ENCODE measurements at regions of chr16 and their contacts with region 1.

Region 1: DNA sequence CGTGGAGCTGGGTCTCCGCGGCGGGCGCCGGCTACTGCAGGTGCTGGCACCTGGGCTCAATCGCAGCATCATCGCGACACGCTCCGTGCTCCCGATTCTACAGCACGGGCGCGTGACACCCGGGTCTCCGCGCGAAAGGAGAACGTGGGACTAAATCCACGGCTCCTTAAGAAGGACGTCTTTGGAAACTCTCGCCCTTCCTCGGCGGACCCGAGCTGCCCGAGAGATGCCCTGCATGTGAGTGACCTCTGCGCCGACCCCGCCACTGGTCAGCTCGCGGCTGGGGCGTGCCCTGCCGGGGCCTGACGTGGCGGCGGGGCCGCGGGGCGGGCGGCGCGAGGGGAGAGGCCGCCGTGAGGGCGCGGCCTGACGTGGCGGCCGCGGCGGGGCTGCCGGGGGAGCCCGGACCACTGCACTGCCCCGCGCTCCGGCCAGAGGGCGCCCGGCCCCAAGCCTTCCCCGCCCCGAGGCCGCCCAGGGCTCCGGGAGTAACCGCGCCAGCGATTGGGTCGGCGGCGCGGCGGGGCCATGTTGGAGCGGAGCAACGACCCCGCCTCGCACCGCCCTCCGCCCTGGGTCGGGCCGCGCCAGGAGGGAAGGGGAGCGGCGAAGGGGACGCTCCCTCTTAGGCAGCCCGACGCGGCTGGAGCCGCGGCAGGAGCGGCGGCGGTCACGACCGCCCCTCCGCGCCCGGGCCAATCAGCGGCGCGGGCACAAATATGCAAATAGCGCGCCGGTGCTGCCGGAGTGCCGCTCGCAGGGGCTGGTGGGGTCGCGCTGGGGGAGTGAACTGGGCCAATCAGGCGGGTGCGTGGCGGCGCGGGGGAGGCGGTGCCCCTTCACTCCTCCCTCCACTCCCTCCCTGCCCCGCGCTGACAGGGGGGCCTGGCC is 75.6 kb downstream of the CHD9 start:
- DNase-seq: peak; percentile 97
- ATAC-seq: peak; percentile 83
- H3K4me3 Mint-ChIP-seq: peak overlapping the region; percentile 87
- H3K27ac Mint-ChIP-seq: peak overlapping the region; percentile 81
- H3K4me1 Mint-ChIP-seq: peaks cover 43% of the 10 kb centered on the region
- H3K27me3 Mint-ChIP-seq: no peaks in the 10 kb centered on the region
- CTCF ChIP-seq: no peak

Region 2: GRCh38 chr16:52953215-52953614 is 177.2 kb before region 1 on chr16:
- CTCF ChIA-PET with region 1: no interaction called
- POLR2A ChIA-PET with region 1: no interaction called
- intact Hi-C with region 1: no loop called
- DNase-seq: no peak
- ATAC-seq: no peak
- H3K4me3 Mint-ChIP-seq: no peak overlapping the region
- H3K27ac Mint-ChIP-seq: no peak overlapping the region
- H3K4me1 Mint-ChIP-seq: no peaks in the 10 kb centered on the region
- H3K27me3 Mint-ChIP-seq: peaks cover 3% of the 10 kb centered on the region
- CTCF ChIP-seq: no peak

Region 3: DNA sequence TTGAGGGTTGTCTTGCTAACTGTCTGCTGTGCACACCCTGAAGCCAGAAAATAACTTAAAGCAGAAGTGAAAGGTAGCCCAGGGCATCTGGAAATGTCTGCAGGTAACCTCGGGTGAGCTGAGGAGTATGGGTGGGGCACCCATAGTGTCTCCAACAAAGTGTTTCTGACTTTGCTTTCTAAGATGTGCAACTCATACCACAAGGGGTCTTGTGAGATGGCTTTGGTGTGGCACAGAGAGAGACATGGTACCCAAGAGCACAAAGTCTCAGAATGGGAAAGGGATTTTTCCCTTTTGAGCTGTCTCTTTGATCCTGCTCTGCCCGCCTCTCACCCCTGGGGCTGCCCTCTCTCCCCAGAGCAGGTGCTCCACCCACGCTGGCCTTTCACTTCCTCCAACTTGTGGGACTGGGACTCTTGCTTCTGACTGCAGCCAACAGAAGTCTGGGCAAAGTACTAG is 68.7 kb before region 1 on chr16:
- CTCF ChIA-PET with region 1: interaction called, 7 read pairs
- POLR2A ChIA-PET with region 1: interaction called, 8 read pairs
- intact Hi-C with region 1: loop called (anchors 1 kb)
- DNase-seq: peak; percentile 65
- ATAC-seq: peak; percentile 82
- H3K4me3 Mint-ChIP-seq: peak overlapping the region; percentile 65
- H3K27ac Mint-ChIP-seq: peak overlapping the region; percentile 82
- H3K4me1 Mint-ChIP-seq: peaks cover 88% of the 10 kb centered on the region
- H3K27me3 Mint-ChIP-seq: no peaks in the 10 kb centered on the region
- CTCF ChIP-seq: no peak

Region 4: DNA sequence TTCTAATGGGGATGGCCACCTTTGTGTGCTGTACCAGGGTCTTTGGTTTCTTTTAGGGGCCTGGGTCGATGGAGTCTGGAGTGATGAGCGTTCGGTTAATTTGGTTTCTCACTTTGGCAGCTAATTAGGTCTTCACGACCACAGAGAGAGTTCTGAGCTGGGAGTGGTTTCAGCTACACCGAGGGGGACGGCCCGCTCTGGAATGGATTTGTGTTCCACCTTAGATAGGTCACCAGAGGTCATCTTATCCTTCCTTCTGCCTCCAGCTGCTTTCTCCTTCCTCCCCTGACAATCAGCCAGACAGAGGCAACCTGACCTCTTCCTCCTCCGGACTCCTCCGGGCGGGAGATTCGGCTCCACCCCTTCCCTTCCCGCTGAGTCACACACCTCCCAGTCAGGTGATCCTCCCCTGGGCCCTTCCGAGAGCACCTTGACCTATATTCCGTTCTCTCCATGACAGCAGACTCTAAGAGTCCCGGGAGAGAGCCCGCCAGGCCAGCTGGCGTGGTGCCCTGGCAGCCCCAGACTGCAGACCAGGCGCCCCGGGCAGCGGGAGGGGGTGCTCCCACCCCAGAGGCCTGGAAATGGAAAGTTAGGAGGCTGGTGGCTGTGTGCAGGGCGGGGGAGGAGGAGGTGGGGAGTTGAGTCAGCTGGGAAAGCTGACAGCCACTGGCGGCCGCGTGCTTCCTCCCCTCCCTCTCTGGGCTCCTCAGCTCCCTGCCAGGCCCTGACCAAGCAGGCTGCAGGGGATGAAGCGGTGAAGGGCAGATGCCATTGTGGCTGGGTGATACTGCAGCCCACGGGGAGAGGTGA is 30.9 kb before region 1 on chr16:
- CTCF ChIA-PET with region 1: interaction called, 6 read pairs
- POLR2A ChIA-PET with region 1: interaction called, 3 read pairs
- intact Hi-C with region 1: loop called (anchors 1 kb)
- DNase-seq: peak; percentile 43
- ATAC-seq: peak; percentile 43
- H3K4me3 Mint-ChIP-seq: peak overlapping the region; percentile 83
- H3K27ac Mint-ChIP-seq: peak overlapping the region; percentile 93
- H3K4me1 Mint-ChIP-seq: peaks cover 69% of the 10 kb centered on the region
- H3K27me3 Mint-ChIP-seq: no peaks in the 10 kb centered on the region
- CTCF ChIP-seq: no peak

Region 5: GRCh38 chr16:53159781-53160436 is 29.5 kb after region 1 on chr16:
- CTCF ChIA-PET with region 1: interaction called, 12 read pairs
- POLR2A ChIA-PET with region 1: no interaction called
- intact Hi-C with region 1: loop called (anchors 1 kb)
- DNase-seq: no peak
- ATAC-seq: peak; percentile 81
- H3K4me3 Mint-ChIP-seq: no peak overlapping the region
- H3K27ac Mint-ChIP-seq: peak overlapping the region; percentile 18
- H3K4me1 Mint-ChIP-seq: peaks cover 4% of the 10 kb centered on the region
- H3K27me3 Mint-ChIP-seq: no peaks in the 10 kb centered on the region
- CTCF ChIP-seq: peak; percentile 88

Region 6: GRCh38 chr16:53435066-53435688 is 304.8 kb after region 1 on chr16:
- CTCF ChIA-PET with region 1: no interaction called
- POLR2A ChIA-PET with region 1: no interaction called
- intact Hi-C with region 1: loop called (anchors 1 kb)
- DNase-seq: peak; percentile 52
- ATAC-seq: peak; percentile 67
- H3K4me3 Mint-ChIP-seq: peak overlapping the region; percentile 89
- H3K27ac Mint-ChIP-seq: peak overlapping the region; percentile 93
- H3K4me1 Mint-ChIP-seq: peaks cover 34% of the 10 kb centered on the region
- H3K27me3 Mint-ChIP-seq: no peaks in the 10 kb centered on the region
- CTCF ChIP-seq: no peak

Region 7: DNA sequence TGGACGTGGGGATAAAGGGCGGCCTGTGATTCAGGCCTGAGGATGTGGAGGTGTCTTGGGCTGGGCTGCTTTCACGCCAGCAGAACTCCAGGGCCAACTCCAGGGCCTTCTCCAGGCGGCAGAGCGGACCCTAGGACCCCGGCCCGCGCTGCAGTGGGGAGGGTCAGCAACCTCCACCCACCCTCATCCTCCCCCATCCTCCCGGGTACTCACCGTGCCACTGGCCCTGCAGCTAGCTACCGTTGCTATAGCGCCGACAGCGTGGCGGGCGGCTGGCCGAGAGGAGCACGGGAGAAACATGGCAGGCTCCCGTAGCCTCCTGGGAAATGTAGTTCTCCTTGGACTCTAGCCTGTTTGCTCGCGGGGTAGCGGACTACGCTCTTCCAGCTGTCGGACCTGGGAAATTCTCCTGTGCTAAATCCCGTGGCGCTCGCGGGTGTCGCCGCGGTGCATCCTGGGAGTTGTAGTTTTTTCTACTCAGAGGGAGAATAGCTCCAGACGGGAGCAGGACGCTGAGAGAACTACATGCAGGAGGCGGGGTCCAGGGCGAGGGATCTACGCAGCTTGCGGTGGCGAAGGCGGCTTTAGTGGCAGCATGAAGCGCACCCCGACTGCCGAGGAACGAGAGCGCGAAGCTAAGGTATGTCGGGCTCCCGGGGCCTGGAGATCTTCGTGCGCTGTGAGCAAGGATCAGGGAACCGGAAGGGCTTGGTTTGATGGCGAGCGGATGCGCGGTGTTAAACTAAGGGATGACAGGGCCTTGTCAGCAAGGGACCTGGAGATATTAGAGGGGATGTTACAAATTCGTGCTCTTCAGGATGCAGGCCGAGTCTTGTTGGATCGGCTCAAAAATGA is 573.4 kb after region 1 on chr16 and contains the starts of genes FTO and RPGRIP1L:
- CTCF ChIA-PET with region 1: no interaction called
- POLR2A ChIA-PET with region 1: no interaction called
- intact Hi-C with region 1: loop called (anchors 1 kb)
- DNase-seq: peak; percentile 91
- ATAC-seq: peak; percentile 96
- H3K4me3 Mint-ChIP-seq: peak within 1 kb of the TSS; percentile 96
- H3K27ac Mint-ChIP-seq: peak within 1 kb of the TSS; percentile 90
- H3K4me1 Mint-ChIP-seq: peaks cover 27% of the 10 kb centered on the region
- H3K27me3 Mint-ChIP-seq: no peaks in the 10 kb centered on the region
- CTCF ChIP-seq: no peak
- total RNA-seq, gene FTO: 59.7 and 65.8 TPM in 2 replicates
- total RNA-seq, gene RPGRIP1L: 5.0 and 5.8 TPM in 2 replicates

Measured in activated B cell treated with CpG ODN at 0.5 μM for 24 hours (primary cell).